ENCODE measurements at regions of chr14 and their contacts with region 1.

Region 1: DNA sequence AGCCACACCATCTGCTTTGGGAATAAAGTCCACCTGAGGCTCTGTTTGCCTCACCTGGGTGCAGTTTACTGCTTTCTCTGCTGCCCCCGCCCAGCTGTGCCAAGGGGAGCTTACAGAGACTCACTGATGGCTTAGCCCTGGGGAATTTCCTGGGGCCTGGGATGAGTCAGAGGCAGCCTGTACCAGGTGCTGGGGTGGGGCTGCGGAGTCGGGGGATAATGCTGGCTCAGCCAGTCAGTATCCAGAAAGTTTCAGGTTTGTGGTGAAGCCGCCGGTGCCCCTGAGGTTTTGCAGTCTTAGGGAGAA is 22.3 kb downstream of the PLEKHG3 start:
- DNase-seq: peak in 2 of 5 donors; percentile 39 to 88
- H3K4me3 ChIP-seq: no peak overlapping the region
- H3K4me3 Mint-ChIP-seq: peak overlapping the region in 7 of 8 donors; percentile 26 to 84 (median 62)
- H3K27ac ChIP-seq: peak overlapping the region; percentile 55
- H3K27ac Mint-ChIP-seq: peak overlapping the region; percentile 65 to 97 (median 92)
- H3K4me1 ChIP-seq: peaks cover 96% of the 10 kb centered on the region
- H3K4me1 Mint-ChIP-seq: peaks cover 78 to 100% (median 88%) of the 10 kb centered on the region in 4 donors
- H3K27me3 ChIP-seq: no peaks in the 10 kb centered on the region
- H3K27me3 Mint-ChIP-seq: no peaks in the 10 kb centered on the region

Region 2: DNA sequence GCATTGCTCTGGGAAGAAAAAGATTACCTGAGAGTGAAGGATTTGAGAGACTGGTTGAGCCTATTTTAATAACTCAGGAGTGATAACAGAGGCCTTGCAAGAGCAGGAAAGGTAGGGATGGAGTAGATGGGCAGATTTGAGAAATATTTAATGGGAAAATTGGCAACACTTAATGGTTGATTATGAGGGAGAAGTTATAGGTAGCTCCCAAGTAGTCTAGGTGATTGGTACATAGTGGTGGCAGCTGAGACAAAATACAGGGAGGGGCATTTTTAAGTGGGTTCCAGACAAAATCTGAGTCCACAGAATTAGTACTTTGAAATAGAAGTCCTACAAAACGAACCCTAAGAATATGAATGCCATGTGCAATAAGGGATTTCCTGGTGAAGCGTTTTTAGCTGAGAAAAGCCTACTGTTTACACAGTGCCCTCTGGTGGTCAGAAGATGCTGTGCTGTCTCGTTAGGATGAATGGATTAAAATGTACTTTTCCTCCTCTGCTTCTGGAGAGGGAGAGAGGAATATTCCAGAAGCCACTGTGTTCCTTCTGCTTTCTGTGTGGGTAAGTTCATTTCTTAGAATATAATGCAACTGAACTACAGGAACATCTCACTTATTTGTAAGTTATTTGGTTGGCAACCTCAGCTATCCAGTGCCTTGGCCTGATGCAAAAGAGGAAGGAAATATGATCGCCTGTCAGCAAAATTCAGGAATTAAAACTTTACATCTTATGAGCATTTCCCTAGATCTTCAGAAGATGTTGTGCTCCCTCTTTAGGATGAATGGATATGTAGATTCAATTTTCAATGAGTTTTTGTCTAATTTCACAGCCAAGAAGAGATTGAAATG is 215.5 kb before region 1 on chr14:
- CTCF ChIA-PET with region 1: no interaction called
- POLR2A ChIA-PET with region 1: no interaction called
- intact Hi-C with region 1: no loop called
- DNase-seq: peak; percentile 65 to 72 (median 69)
- H3K4me3 ChIP-seq: no peak overlapping the region
- H3K4me3 Mint-ChIP-seq: peak overlapping the region in 7 of 8 donors; percentile 12 to 93 (median 65)
- H3K27ac ChIP-seq: peak overlapping the region; percentile 59
- H3K27ac Mint-ChIP-seq: peak overlapping the region; percentile 54 to 94 (median 88)
- H3K4me1 ChIP-seq: peaks cover 92% of the 10 kb centered on the region
- H3K4me1 Mint-ChIP-seq: peaks cover 62 to 93% (median 81%) of the 10 kb centered on the region in 4 donors
- H3K27me3 ChIP-seq: no peaks in the 10 kb centered on the region
- H3K27me3 Mint-ChIP-seq: no peaks in the 10 kb centered on the region

Region 3: GRCh38 chr14:64688811-64689281 is 37.7 kb before region 1 on chr14:
- CTCF ChIA-PET with region 1: interaction called, 4 read pairs
- POLR2A ChIA-PET with region 1: interaction called, 469 read pairs
- intact Hi-C with region 1: no loop called
- DNase-seq: peak in 1 of 5 donors; percentile 48
- H3K4me3 ChIP-seq: no peak overlapping the region
- H3K4me3 Mint-ChIP-seq: peak overlapping the region in 7 of 8 donors; percentile 52 to 77 (median 71)
- H3K27ac ChIP-seq: no peak overlapping the region
- H3K27ac Mint-ChIP-seq: peak overlapping the region in 6 of 7 donors; percentile 49 to 87 (median 70)
- H3K4me1 ChIP-seq: peaks cover 29% of the 10 kb centered on the region
- H3K4me1 Mint-ChIP-seq: peaks cover 31 to 64% (median 44%) of the 10 kb centered on the region in 4 donors
- H3K27me3 ChIP-seq: no peaks in the 10 kb centered on the region
- H3K27me3 Mint-ChIP-seq: no peaks in the 10 kb centered on the region

Region 4: GRCh38 chr14:64745511-64746091 is 19.1 kb after region 1 on chr14:
- CTCF ChIA-PET with region 1: interaction called, 5 read pairs
- POLR2A ChIA-PET with region 1: interaction called, 10 read pairs
- intact Hi-C with region 1: no loop called
- DNase-seq: no peak
- H3K4me3 ChIP-seq: no peak overlapping the region
- H3K4me3 Mint-ChIP-seq: peak overlapping the region in 7 of 8 donors; percentile 12 to 75 (median 43)
- H3K27ac ChIP-seq: peak overlapping the region; percentile 28
- H3K27ac Mint-ChIP-seq: peak overlapping the region; percentile 71 to 93 (median 85)
- H3K4me1 ChIP-seq: peaks cover 29% of the 10 kb centered on the region
- H3K4me1 Mint-ChIP-seq: peaks cover 30 to 52% (median 38%) of the 10 kb centered on the region in 4 donors
- H3K27me3 ChIP-seq: no peaks in the 10 kb centered on the region
- H3K27me3 Mint-ChIP-seq: no peaks in the 10 kb centered on the region

Measured in CD4-positive, alpha-beta memory T cell (primary cell).